H1 (cell line): ENCODE measurements at regions of chr4 and their contacts with region 1.

Region 1: DNA sequence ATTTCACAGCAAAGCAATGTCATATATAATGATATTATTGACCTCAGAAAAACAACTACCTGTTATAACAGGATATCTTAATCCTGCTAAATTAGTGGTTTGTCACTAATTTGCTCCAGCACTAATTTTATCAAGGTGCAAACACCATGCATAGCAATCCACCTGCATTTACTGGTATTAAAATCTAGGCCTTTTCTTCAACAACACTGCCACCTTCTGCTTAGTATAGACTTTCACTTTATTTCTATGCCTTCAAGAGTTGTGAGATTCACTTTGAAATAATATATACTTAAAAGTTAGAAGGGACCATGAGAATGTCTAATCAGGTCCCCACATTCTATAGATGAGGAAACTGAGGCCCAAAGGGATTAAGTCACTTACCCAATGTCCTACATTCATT is 82.1 kb upstream of the IQCM start:
- DNase-seq: no peak
- H3K4me3 ChIP-seq: no peak overlapping the region
- H3K27ac ChIP-seq: no peak overlapping the region
- H3K4me1 ChIP-seq: no peaks in the 10 kb centered on the region
- H3K27me3 ChIP-seq: peaks cover 0 to 1% (median 0%) of the 10 kb centered on the region in 4 experiments; a peak in 1 of 7 replicates
- CTCF ChIP-seq: peak in 1 of 3 experiments; percentile 40; a peak in 2 of 4 replicates
- EP300 ChIP-seq: no peak
- POLR2A ChIP-seq: no peak
- RAD21 ChIP-seq: peak; percentile 76 to 77

Region 2: GRCh38 chr4:149370785-149371420 is 526.9 kb before region 1 on chr4:
- CTCF ChIA-PET with region 1: interaction called, 18 read pairs
- POLR2A ChIA-PET with region 1: no interaction called
- DNase-seq: peak in 1 of 2 experiments; percentile 7
- H3K4me3 ChIP-seq: no peak overlapping the region
- H3K27ac ChIP-seq: no peak overlapping the region
- H3K4me1 ChIP-seq: no peaks in the 10 kb centered on the region
- H3K27me3 ChIP-seq: no peaks in the 10 kb centered on the region
- CTCF ChIP-seq: peak in 2 of 3 experiments; percentile 48 to 52; a peak in 3 of 4 replicates
- EP300 ChIP-seq: no peak
- POLR2A ChIP-seq: no peak
- RAD21 ChIP-seq: peak; percentile 76 to 82

Region 3: DNA sequence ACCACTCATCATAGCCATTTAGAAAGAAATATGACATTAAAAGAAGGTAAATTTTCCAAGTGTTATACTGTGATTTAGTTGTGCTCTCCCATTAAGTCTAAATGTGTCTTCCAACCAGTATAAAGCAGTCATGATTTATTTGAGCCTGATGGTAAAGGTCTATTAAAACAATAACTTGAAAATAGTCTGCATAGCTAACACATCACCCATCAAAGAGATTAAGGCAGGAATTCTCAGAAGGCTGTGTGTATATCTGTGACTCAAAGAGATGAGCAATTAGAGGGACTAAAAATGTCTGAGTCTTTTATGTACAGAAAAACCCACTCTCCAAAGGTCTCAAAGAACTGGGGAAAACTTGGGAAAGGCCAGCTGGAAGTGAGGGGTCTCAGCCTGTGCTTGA is 11.9 kb before region 1 on chr4:
- CTCF ChIA-PET with region 1: interaction called, 10 read pairs
- POLR2A ChIA-PET with region 1: no interaction called
- DNase-seq: no peak
- H3K4me3 ChIP-seq: no peak overlapping the region
- H3K27ac ChIP-seq: no peak overlapping the region
- H3K4me1 ChIP-seq: no peaks in the 10 kb centered on the region
- H3K27me3 ChIP-seq: no peaks in the 10 kb centered on the region
- CTCF ChIP-seq: no peak
- EP300 ChIP-seq: no peak
- POLR2A ChIP-seq: no peak
- RAD21 ChIP-seq: no peak